CD4-positive, alpha-beta memory T cell (primary cell): ENCODE measurements at regions of chr19 and their contacts with region 1.

Region 1: DNA sequence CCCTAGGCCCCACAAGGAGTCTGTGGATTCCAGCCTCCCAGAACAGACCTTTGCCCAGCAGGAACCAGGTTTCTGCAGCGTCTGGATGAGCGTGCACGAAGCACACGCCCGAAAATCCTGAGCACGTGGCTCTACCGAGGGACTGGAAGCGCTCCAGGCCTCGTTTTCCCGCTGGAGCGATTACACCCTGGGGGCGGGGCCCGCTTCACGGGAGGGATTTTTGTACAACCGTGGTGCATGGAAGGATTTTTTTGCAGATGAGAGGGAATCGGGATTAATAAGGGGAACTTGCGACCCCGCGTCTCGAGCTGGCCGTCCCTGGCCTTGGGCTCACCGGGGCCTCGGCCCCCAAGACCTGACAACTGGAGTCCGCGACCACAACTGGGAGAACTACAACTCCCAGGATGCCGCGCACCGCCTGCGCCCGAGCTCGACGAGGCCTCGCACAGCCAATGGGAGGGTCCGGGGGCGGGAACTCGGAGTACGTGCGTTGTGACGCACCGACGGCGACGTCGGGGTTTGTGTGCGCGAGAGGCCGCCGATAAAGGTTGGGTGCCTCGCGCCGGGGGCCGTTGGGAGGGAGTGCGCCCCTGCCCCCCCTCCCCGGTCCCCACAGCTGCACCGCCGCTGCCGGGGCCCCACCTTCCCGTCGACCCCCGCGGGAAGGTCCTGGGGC is at the start of gene ZNF628:
- DNase-seq: peak; percentile 97 to 98 (median 97)
- H3K4me3 ChIP-seq: peak within 1 kb of the TSS; percentile 65 to 84
- H3K4me3 Mint-ChIP-seq: peak within 1 kb of the TSS; percentile 88 to 93 (median 90)
- H3K27ac ChIP-seq: peak within 1 kb of the TSS; percentile 71
- H3K27ac Mint-ChIP-seq: peak within 1 kb of the TSS; percentile 90 to 97 (median 94)
- H3K4me1 ChIP-seq: peaks cover 22% of the 10 kb centered on the region
- H3K4me1 Mint-ChIP-seq: peaks cover 19 to 42% (median 29%) of the 10 kb centered on the region in 4 donors
- H3K27me3 ChIP-seq: no peaks in the 10 kb centered on the region
- H3K27me3 Mint-ChIP-seq: no peaks in the 10 kb centered on the region
- total RNA-seq, gene ZNF628: 8.1 to 9.1 TPM

Region 2: DNA sequence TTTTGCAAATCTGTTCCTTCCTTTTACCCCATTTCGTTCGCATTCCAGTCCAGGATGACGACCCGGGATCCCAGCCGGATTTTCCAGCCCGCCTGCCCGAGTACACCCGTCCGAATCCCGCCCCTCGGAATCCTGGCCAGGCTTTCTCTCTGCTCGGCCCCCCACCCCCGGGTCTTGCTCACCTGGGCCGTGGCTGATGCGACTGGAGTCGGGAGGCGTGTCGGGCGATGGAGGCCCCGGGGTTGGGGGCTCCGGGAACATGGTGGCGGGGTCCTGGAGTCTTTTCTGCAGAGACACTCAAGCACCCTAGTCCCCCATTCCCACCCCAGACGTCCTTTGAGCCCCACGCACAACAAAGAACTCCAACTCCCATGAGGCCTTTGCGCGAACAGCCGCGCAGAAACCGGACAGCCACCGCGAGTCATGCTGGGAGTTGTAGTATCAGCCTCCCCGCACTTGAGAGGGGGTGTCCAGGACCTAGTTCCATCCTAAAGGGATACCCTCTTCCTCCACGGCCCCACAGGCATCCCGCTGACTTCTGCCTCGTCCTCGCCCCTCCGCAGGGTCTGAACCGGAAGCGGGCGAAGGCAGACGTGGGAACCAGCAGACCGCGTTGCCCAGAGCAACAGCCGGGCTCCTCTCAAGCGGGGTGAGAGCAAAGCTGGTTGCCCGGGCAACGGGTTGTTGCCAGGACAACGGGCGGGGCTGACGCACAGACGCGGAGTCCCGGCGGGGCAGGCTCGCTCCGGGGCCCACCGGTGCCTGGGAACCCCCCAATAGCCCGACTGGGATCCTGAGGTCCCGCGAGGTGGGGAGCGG is 297.2 kb before region 1 on chr19:
- CTCF ChIA-PET with region 1: no interaction called
- POLR2A ChIA-PET with region 1: no interaction called
- intact Hi-C with region 1: loop called (anchors 1 kb)
- DNase-seq: peak; percentile 94 to 98 (median 95)
- H3K4me3 ChIP-seq: peak overlapping the region; percentile 42 to 63
- H3K4me3 Mint-ChIP-seq: peak overlapping the region; percentile 66 to 88 (median 83)
- H3K27ac ChIP-seq: peak overlapping the region; percentile 46
- H3K27ac Mint-ChIP-seq: peak overlapping the region; percentile 87 to 99 (median 96)
- H3K4me1 ChIP-seq: peaks cover 30% of the 10 kb centered on the region
- H3K4me1 Mint-ChIP-seq: peaks cover 12 to 37% (median 23%) of the 10 kb centered on the region in 4 donors
- H3K27me3 ChIP-seq: peaks cover 50% of the 10 kb centered on the region
- H3K27me3 Mint-ChIP-seq: peaks cover 45 to 61% of the 10 kb centered on the region in 2 donors

Region 3: DNA sequence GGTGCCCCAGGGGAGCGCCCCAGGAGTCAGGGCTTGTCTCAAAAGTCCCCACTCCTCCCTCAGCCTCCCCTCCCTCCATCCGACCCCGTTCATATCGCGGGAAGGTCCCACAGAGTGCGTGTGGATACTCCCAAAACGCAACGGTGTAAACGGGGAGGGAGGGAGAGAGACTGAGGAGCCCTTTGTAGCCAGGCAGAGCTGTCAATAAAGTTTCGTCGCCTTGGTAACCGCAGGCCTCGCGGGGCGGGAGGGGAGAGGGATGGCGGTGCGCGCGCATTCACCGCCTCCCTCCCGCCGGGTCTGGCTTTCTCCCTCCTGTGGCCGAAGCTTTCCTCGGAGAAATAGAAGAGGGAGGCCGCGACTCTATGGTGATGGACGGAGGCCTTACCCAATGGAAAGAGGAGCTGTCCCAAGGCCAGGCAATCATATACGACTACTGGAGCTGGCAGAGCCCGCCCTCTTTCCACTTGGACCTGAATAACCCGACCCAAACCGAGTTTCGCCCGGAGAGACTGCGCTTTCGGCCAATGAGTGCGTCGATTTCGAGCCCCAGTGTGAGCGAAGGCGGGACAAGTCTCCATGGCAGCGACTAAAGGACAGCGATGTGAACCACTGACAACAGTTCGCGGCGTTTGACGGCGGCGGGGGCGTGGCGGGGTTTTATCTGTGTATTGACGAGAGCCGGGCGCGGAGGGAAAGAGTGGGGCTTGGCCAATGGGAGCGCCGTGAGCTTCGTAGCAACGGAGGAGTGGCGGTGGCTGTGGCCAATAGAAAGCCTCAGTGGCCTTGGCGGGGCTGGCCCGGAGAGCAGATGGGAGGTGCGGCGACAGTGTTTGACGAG is 137.0 kb before region 1 on chr19 and contains the start of gene KMT5C:
- CTCF ChIA-PET with region 1: interaction called, 3 read pairs
- POLR2A ChIA-PET with region 1: interaction called, 16 read pairs
- intact Hi-C with region 1: loop called (anchors 1 kb)
- DNase-seq: peak; percentile 100
- H3K4me3 ChIP-seq: peak within 1 kb of the TSS; percentile 66 to 74
- H3K4me3 Mint-ChIP-seq: peak within 1 kb of the TSS; percentile 90 to 96 (median 93)
- H3K27ac ChIP-seq: peak within 1 kb of the TSS; percentile 90
- H3K27ac Mint-ChIP-seq: peak within 1 kb of the TSS; percentile 97 to 100 (median 99)
- H3K4me1 ChIP-seq: peaks cover 24% of the 10 kb centered on the region
- H3K4me1 Mint-ChIP-seq: peaks cover 9 to 35% (median 18%) of the 10 kb centered on the region in 4 donors
- H3K27me3 ChIP-seq: no peaks in the 10 kb centered on the region
- H3K27me3 Mint-ChIP-seq: peaks cover 1 to 12% of the 10 kb centered on the region in 2 donors
- total RNA-seq, gene KMT5C: 23.1 to 23.5 TPM

Region 4: DNA sequence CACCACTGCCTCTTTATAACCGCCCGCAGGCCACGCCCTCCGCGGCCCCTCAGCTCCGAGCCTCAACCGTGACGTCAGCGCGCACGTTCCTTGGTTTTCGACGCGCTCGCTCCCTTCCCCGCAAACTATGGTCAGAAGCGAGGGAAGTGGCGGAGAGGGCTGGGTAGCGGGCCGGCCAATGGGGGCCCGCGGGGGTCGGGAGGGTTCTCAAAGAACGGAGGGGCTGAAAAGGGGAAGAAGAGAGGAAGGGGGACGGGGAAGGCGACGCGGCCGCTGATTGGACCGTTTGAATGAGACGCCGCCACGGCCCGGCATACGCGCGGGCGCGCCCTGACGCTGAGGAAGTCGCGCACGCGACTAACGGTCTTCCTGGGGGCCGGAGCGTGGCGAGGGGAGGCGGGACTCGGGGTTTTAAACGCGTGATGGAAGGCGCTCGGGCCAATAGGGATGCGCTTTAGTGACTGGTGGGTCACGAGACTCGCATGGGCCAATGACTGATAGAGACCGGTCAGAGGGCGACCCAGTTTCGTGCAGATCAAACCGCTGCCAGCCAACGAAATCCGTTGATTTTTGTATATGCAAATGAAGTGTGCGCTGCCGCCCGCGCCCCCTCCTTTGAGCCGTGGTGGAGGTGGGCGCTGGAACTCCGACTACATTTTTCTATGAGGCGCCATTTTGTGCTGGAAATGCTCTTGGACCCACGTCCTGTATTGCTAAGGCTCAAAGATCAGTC is 68.3 kb before region 1 on chr19:
- CTCF ChIA-PET with region 1: interaction called, 6 read pairs
- POLR2A ChIA-PET with region 1: interaction called, 16 read pairs
- intact Hi-C with region 1: no loop called
- DNase-seq: peak; percentile 96 to 99 (median 98)
- H3K4me3 ChIP-seq: peak overlapping the region; percentile 64 to 69
- H3K4me3 Mint-ChIP-seq: peak overlapping the region; percentile 89 to 96 (median 93)
- H3K27ac ChIP-seq: peak overlapping the region; percentile 99
- H3K27ac Mint-ChIP-seq: peak overlapping the region; percentile 98 to 100 (median 99)
- H3K4me1 ChIP-seq: peaks cover 24% of the 10 kb centered on the region
- H3K4me1 Mint-ChIP-seq: peaks cover 22 to 32% (median 28%) of the 10 kb centered on the region in 4 donors
- H3K27me3 ChIP-seq: no peaks in the 10 kb centered on the region
- H3K27me3 Mint-ChIP-seq: no peaks in the 10 kb centered on the region

Region 5: DNA sequence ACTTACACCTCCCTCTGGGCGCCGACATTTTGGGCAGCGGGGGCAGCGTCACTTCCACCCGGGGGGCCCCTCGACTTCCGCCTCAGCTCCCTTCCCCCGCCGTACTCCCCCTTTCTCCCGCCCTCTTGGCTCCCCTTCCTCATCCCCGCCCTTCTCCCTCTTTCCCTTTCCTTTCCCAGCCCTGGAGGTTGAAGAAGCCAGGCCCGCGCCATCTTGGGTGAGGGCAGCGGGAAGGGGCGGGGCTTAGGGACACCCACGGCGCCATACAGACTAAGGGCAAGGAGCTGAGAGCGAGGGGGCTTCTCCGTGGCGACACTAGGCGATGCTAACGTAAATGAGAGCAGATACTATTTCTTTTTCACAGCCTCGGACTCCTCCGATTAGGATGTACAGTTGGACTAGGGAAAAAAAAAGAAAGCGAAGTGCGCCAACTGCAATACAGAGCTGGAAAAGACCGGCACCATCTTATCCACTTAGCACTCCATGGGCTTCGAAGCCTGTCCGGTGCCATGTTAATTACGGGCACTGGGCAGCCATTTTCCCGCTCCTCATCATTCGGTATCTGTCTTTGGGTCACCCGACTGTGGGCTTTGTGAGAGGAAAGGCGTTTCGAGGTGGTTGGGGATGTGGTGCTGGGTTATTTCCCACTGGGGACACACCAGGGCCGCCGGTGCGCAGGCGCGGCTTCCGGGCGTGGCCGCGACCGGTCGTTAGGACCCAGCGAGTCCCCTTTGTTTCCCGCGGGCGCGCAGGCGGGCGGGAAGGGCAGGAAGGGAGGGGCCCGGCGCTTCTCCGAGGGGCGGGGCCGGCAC is 123.4 kb after region 1 on chr19 and contains the start of gene FIZ1:
- CTCF ChIA-PET with region 1: no interaction called
- POLR2A ChIA-PET with region 1: interaction called, 17 read pairs
- intact Hi-C with region 1: loop called (anchors 1 kb)
- DNase-seq: peak; percentile 96 to 98 (median 97)
- H3K4me3 ChIP-seq: peak within 1 kb of the TSS; percentile 93 to 99
- H3K4me3 Mint-ChIP-seq: peak within 1 kb of the TSS; percentile 98 to 100 (median 98)
- H3K27ac ChIP-seq: peak within 1 kb of the TSS; percentile 89
- H3K27ac Mint-ChIP-seq: peak within 1 kb of the TSS; percentile 96 to 100 (median 99)
- H3K4me1 ChIP-seq: peaks cover 28% of the 10 kb centered on the region
- H3K4me1 Mint-ChIP-seq: peaks cover 22 to 38% (median 25%) of the 10 kb centered on the region in 4 donors
- H3K27me3 ChIP-seq: no peaks in the 10 kb centered on the region
- H3K27me3 Mint-ChIP-seq: no peaks in the 10 kb centered on the region
- total RNA-seq, gene FIZ1: 20.8 to 26.4 TPM

Region 6: DNA sequence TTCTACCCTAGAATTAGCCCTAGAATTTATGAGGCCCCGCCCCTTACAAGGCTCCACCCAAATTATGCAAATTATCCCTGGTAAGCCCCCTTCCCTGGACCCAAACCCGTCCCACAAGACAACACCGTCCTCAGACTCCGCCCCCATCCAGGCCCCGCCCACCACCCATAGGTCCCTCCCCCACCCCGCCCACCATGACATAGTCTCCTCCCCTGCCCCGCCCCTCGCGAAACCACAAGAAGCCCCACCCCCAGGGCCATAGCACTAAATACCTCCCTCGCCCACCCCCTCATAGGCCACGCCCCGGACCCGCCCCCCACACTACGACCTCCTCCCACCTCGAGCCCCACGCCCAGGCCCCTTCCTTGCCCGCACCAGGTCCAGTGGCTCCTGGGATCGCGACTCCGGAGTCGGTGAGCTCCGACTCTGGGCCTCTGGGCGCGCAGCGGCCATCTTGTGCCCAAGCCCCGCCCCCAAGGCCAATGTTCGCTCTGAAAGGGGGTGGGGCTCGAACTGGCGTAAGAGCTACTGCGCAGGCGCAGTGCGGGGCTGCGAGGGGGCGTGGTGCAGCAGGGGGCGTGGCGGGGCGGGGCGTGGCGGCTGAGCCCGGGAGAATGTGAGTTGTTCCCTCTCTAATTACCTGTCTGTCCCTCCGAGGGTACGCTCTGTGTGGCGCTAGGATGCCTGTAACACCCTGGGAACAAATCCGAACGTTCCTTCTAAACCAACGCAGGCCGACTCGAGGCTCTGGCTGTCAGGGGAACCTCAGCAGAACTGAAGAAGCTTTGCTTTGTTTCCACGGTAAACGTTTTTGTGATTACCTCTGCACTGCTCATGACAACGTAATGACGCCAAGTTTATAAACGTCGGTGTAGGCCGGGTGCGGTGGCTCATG is 148.1 kb after region 1 on chr19 and contains the start of gene ZNF784:
- CTCF ChIA-PET with region 1: interaction called, 3 read pairs
- POLR2A ChIA-PET with region 1: interaction called, 22 read pairs
- intact Hi-C with region 1: loop called (anchors 1 kb)
- DNase-seq: peak; percentile 90 to 94 (median 93)
- H3K4me3 ChIP-seq: peak within 1 kb of the TSS; percentile 57 to 64
- H3K4me3 Mint-ChIP-seq: peak within 1 kb of the TSS; percentile 88 to 96 (median 90)
- H3K27ac ChIP-seq: peak within 1 kb of the TSS; percentile 88
- H3K27ac Mint-ChIP-seq: peak within 1 kb of the TSS; percentile 96 to 99 (median 98)
- H3K4me1 ChIP-seq: peaks cover 38% of the 10 kb centered on the region
- H3K4me1 Mint-ChIP-seq: peaks cover 30 to 57% (median 42%) of the 10 kb centered on the region in 4 donors
- H3K27me3 ChIP-seq: no peaks in the 10 kb centered on the region
- H3K27me3 Mint-ChIP-seq: no peaks in the 10 kb centered on the region
- total RNA-seq, gene ZNF784: 7.4 TPM